ENCODE measurements at regions of chr10 and their contacts with region 1.

Region 1: DNA sequence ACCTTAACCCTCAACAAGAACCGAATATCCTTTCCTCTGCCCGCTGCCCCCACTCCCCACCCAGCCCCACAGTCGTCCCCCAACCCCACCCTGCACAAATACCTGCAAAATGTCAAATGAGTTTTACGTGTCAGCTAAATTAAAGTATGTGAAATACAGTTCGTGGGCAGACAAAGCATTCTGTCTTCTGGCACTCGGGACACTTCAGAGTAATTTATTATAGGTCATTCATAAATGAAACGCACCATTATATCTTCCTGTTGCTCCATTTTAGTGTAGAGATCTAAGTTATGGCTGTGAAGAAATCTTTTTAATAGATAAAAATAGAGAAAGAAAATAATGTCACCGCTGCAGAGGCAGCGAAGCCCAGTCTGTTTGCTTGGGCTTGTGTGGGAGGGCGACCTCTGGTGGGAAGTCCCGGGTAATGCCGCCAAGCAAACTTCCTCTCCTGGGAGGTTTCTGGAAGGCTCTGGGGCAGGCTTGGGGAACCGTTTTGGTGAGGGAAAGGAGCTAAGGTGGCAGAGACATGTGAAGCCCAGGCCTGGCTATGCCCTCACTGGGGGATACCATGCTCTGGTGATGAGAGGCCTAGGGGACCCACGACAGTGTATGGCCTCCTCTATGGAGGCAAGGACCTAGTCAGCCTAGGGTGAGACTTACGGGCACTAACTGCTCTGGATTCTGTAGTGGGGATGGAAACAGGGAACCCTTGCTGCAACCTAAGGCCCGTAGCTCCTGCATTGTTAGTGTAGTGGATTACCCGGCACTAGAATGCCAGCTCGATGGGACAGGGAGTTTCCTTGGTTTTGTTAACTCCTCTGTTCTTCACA is 604.9 kb downstream of the LRMDA start:
- DNase-seq: peak; percentile 79 to 91
- H3K4me3 ChIP-seq: peak overlapping the region in 1 of 4 donors; percentile 2
- H3K27ac ChIP-seq: peak overlapping the region in 1 of 5 donors; percentile 30
- H3K4me1 ChIP-seq: peaks cover 16 to 39% (median 31%) of the 10 kb centered on the region in 4 donors
- H3K27me3 ChIP-seq: no peaks in the 10 kb centered on the region
- CTCF ChIP-seq: peak in 5 of 7 experiments; percentile 69 to 93 (median 90)
- EP300 ChIP-seq: no peak
- POLR2A ChIP-seq: no peak

Region 2: DNA sequence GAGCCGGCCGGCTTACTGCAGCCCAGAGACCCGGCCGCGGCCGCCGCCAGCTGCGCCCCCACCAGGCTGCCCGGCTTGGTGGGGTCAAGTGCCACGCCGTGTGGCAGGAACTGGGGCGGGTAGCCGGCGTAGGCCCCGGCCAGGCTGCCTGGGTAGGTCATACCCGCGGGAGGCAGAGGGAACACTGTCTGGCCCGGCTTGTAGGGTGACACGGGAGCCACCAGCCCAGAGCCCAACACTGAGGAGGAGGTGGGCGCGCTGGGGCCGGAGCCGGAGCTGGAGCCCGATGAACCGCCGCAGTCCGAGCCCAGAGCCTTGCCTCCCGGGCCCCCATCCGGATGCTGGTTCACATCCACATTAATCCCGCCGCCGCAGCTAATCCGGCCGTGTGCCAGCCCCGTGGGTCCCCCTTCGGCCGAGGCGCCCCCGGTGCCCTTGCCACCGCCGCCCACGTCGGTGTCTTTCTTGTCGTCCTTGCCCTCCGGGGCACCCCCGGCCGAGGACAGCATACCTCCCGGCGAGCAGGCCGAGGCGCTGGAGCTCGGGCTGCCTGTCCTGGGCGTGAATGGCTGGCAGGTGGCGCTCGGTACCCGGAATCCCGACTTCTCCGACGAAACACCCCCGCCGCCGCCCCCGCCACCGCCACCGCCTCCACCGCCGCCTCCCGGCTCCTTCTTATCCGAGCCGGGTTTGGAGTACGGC is 636.7 kb before region 1 on chr10:
- intact Hi-C with region 1: loop called (anchors 10 kb)
- DNase-seq: peak; percentile 84 to 93
- H3K4me3 ChIP-seq: peak overlapping the region; percentile 75 to 98 (median 87)
- H3K27ac ChIP-seq: peak overlapping the region; percentile 92 to 99 (median 96)
- H3K4me1 ChIP-seq: peaks cover 15 to 53% (median 45%) of the 10 kb centered on the region in 4 donors
- H3K27me3 ChIP-seq: peaks cover 0 to 49% (median 0%) of the 10 kb centered on the region in 3 donors
- CTCF ChIP-seq: peak in 4 of 7 experiments; percentile 11 to 77 (median 53)
- EP300 ChIP-seq: no peak
- POLR2A ChIP-seq: no peak

Region 3: DNA sequence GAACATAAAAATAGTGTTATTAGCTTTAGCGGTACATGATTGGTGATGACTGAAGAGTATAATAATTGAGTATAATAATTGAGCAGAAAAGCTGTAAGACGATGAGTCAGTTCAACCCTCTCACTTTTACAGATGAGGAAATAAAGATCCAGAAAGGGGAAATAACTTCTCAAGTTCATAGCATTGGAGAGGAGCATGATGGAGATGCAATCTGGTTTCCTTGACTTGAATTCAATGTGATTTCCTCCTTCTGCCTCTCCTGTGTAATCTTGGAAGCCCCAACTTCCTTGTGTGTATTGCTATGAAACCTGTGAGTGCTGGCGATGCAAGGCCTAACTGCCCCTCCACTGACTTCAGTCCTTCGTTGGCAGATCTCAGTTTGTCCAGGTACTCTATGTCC is 339.8 kb before region 1 on chr10:
- intact Hi-C with region 1: no loop called
- DNase-seq: no peak
- H3K4me3 ChIP-seq: no peak overlapping the region
- H3K27ac ChIP-seq: no peak overlapping the region
- H3K4me1 ChIP-seq: no peaks in the 10 kb centered on the region
- H3K27me3 ChIP-seq: no peaks in the 10 kb centered on the region
- CTCF ChIP-seq: no peak
- EP300 ChIP-seq: no peak
- POLR2A ChIP-seq: no peak

Region 4: DNA sequence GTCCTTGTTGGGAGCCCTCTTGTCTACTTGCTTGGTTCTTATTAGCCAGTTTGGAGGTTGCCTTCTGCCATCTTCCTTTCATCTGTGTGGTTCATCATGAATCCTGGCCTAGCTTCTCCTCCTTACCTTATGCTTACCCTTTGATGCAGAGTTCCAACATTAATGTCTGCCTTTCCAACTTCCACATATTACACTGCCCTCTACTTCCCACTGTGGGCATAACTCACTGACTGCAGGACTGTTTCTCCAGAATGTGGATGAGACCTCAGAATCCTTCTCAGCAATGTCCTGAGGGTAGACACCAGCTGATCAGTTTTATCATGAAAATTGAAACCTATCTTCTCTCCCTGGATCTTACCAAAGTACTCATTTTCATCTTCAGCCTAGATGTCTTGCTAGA is 113.9 kb before region 1 on chr10:
- intact Hi-C with region 1: loop called (anchors 10 kb)
- DNase-seq: peak in 1 of 2 donors; percentile 38
- H3K4me3 ChIP-seq: no peak overlapping the region
- H3K27ac ChIP-seq: no peak overlapping the region
- H3K4me1 ChIP-seq: no peaks in the 10 kb centered on the region
- H3K27me3 ChIP-seq: no peaks in the 10 kb centered on the region
- CTCF ChIP-seq: peak in 2 of 7 experiments; percentile 17 to 30
- EP300 ChIP-seq: no peak
- POLR2A ChIP-seq: no peak

Measured in stomach (tissue), 19 donors.